Activated CD8-positive, alpha-beta T cell treated with anti-CD3 and anti-CD28 coated beads for 36 hours (primary cell): ENCODE measurements at regions of chr7 and their contacts with region 1.

Region 1: GRCh38 chr7:87213811-87214210 is 5.7 kb downstream of the TMEM243 start:
- DNase-seq: peak; percentile 18
- ATAC-seq: no peak
- H3K4me3 Mint-ChIP-seq: peak overlapping the region; percentile 43
- H3K27ac Mint-ChIP-seq: peak overlapping the region; percentile 95
- H3K4me1 Mint-ChIP-seq: peaks cover 74% of the 10 kb centered on the region
- H3K27me3 Mint-ChIP-seq: no peaks in the 10 kb centered on the region
- CTCF ChIP-seq: no peak

Region 2: DNA sequence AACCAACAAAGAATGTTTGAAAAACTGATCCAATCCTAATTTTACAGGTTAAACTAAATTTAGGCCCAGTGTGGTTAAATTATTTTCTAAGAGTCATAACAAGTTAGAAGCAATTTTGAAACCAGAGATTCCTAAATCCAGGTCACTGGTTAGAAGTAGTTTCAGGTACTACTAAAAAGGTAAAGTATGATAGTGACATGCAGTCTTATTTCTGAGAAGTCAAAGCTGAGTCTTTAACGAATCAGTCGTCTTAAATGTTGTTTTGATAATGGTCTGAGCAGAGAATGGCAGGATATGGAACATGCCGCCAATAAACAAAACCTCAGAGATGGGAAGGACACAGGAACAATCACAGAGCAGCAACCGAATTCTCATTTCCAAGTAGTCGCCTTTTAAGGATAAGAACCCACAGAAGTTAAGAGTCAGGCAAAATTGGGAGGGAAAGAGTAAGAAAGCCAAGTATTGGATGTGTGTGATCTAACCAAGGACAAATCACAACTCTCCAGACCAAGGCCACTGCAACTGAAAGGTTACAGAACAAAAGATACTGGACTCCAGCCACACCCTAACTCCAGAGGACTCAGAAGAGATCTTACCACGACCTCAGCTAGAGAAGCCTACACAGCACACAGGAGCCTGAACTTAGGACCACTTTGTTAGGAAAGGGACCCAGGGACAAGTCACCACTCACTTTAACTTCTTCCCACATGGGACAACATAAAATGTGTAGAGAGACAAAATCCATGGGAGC is 13.9 kb before region 1 on chr7:
- CTCF ChIA-PET with region 1: interaction called, 7 read pairs
- POLR2A ChIA-PET with region 1: interaction called, 60 read pairs
- intact Hi-C with region 1: no loop called
- DNase-seq: no peak
- ATAC-seq: no peak
- H3K4me3 Mint-ChIP-seq: no peak overlapping the region
- H3K27ac Mint-ChIP-seq: peak overlapping the region; percentile 62
- H3K4me1 Mint-ChIP-seq: peaks cover 71% of the 10 kb centered on the region
- H3K27me3 Mint-ChIP-seq: no peaks in the 10 kb centered on the region
- CTCF ChIP-seq: no peak